ENCODE measurements at regions of chr3 and their contacts with region 1.

Region 1: GRCh38 chr3:50321336-50322114 is 1.0 kb downstream of the HYAL2 start:
- DNase-seq: peak; percentile 67 to 90 (median 83)
- ATAC-seq: peak; percentile 83
- H3K4me3 ChIP-seq: peak overlapping the region; percentile 97
- H3K4me3 Mint-ChIP-seq: peak overlapping the region; percentile 74 to 90 (median 82)
- H3K27ac ChIP-seq: peak overlapping the region; percentile 95
- H3K27ac Mint-ChIP-seq: peak overlapping the region; percentile 40 to 96 (median 93)
- H3K4me1 ChIP-seq: peaks cover 12 to 21% of the 10 kb centered on the region in 2 donors
- H3K4me1 Mint-ChIP-seq: peaks cover 21 to 45% (median 36%) of the 10 kb centered on the region in 7 donors
- H3K27me3 ChIP-seq: no peaks in the 10 kb centered on the region
- H3K27me3 Mint-ChIP-seq: no peaks in the 10 kb centered on the region

Region 2: GRCh38 chr3:50264370-50264963 is 57.1 kb before region 1 on chr3:
- CTCF ChIA-PET with region 1: no interaction called
- POLR2A ChIA-PET with region 1: no interaction called
- intact Hi-C with region 1: no loop called
- DNase-seq: no peak
- ATAC-seq: no peak
- H3K4me3 ChIP-seq: no peak overlapping the region
- H3K4me3 Mint-ChIP-seq: no peak overlapping the region
- H3K27ac ChIP-seq: no peak overlapping the region
- H3K27ac Mint-ChIP-seq: no peak overlapping the region
- H3K4me1 ChIP-seq: peaks cover 4 to 6% of the 10 kb centered on the region in 2 donors
- H3K4me1 Mint-ChIP-seq: peaks cover 0 to 8% (median 3%) of the 10 kb centered on the region in 7 donors
- H3K27me3 ChIP-seq: no peaks in the 10 kb centered on the region
- H3K27me3 Mint-ChIP-seq: peaks cover 0 to 30% (median 0%) of the 10 kb centered on the region in 5 donors

Region 3: DNA sequence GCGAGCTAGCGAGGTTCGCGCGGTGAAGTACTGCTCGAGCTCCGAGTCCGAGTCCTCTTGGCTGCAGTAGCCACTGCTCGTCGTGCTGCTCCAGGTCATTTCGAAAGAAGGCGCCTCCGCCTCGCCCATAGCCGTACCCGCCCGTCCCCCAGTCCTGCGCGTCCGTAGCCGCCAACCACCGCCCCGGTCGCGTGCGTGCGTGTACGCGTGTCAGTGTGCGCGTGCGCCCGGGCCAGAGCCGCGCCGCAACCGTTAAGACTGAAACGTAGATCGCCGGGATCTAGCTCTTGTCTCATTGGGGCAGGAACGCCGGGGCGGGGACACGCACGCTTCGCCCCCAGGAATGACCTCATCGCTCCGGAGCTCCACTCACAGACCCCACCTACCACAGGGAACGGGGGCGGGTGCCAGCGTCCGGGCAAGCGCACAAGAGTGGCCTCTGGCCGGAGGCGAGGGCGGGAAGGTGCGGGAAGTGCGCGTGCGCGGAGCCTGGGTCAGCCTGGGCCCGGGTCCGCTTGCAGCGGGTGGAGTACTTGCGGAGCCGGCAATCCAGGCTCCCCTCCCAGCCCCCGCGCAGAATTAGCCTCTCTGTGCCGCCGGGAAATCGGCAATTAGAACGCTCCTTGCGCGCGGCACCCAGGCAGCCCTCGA is 15.8 kb after region 1 on chr3:
- CTCF ChIA-PET with region 1: interaction called, 13 read pairs
- POLR2A ChIA-PET with region 1: interaction called, 52 read pairs
- intact Hi-C with region 1: loop called (anchors 1 to 2 kb)
- DNase-seq: peak; percentile 83 to 98 (median 91)
- ATAC-seq: peak; percentile 88
- H3K4me3 ChIP-seq: peak overlapping the region; percentile 83
- H3K4me3 Mint-ChIP-seq: peak overlapping the region; percentile 92 to 97 (median 95)
- H3K27ac ChIP-seq: peak overlapping the region; percentile 92
- H3K27ac Mint-ChIP-seq: peak overlapping the region; percentile 92 to 97 (median 96)
- H3K4me1 ChIP-seq: peaks cover 43 to 58% of the 10 kb centered on the region in 2 donors
- H3K4me1 Mint-ChIP-seq: peaks cover 35 to 73% (median 68%) of the 10 kb centered on the region in 7 donors
- H3K27me3 ChIP-seq: no peaks in the 10 kb centered on the region
- H3K27me3 Mint-ChIP-seq: peaks cover 0 to 3% (median 0%) of the 10 kb centered on the region in 5 donors

Region 4: GRCh38 chr3:50542177-50543034 is 220.9 kb after region 1 on chr3:
- CTCF ChIA-PET with region 1: no interaction called
- POLR2A ChIA-PET with region 1: no interaction called
- intact Hi-C with region 1: loop called in 1 of 2 experiments (anchors 1 kb)
- DNase-seq: peak; percentile 22 to 68 (median 44)
- ATAC-seq: peak; percentile 81
- H3K4me3 ChIP-seq: no peak overlapping the region
- H3K4me3 Mint-ChIP-seq: no peak overlapping the region
- H3K27ac ChIP-seq: no peak overlapping the region
- H3K27ac Mint-ChIP-seq: no peak overlapping the region
- H3K4me1 ChIP-seq: no peaks in the 10 kb centered on the region
- H3K4me1 Mint-ChIP-seq: peaks cover 0 to 5% (median 0%) of the 10 kb centered on the region in 7 donors
- H3K27me3 ChIP-seq: no peaks in the 10 kb centered on the region
- H3K27me3 Mint-ChIP-seq: peaks cover 0 to 36% (median 0%) of the 10 kb centered on the region in 5 donors

Measured in naive thymus-derived CD4-positive, alpha-beta T cell (primary cell).